ENCODE measurements at regions of chr10 and their contacts with region 1.

Region 1: GRCh38 chr10:23461557-23461956 is 22.7 kb downstream of the OTUD1 start:
- DNase-seq: no peak

Region 2: GRCh38 chr10:23391821-23392220 is 69.7 kb before region 1 on chr10:
- intact Hi-C with region 1: no loop called
- DNase-seq: no peak

Region 3: GRCh38 chr10:23439946-23440729 is 21.4 kb before region 1 on chr10:
- intact Hi-C with region 1: loop called in 1 of 2 experiments (anchors 2 kb)
- DNase-seq: peak; percentile 81

Region 4: GRCh38 chr10:23540401-23541030 is 79.0 kb after region 1 on chr10:
- intact Hi-C with region 1: no loop called
- DNase-seq: no peak

Measured in posterior vena cava (tissue), 2 donors.